Psoas muscle (tissue), 8 donors: ENCODE measurements at regions of chr5 and their contacts with region 1.

Region 1: GRCh38 chr5:53170748-53171349 is 61.3 kb upstream of the MOCS2 start:
- DNase-seq: no peak
- ATAC-seq: peak in 1 of 4 donors; percentile 53
- H3K4me3 ChIP-seq: no peak overlapping the region
- H3K27ac ChIP-seq: no peak overlapping the region
- H3K4me1 ChIP-seq: no peaks in the 10 kb centered on the region
- H3K27me3 ChIP-seq: peaks cover 0 to 3% (median 0%) of the 10 kb centered on the region in 3 donors
- CTCF ChIP-seq: peak; percentile 32

Region 2: GRCh38 chr5:53084546-53085255 is 86.1 kb before region 1 on chr5:
- intact Hi-C with region 1: no loop called
- DNase-seq: no peak
- ATAC-seq: no peak
- H3K4me3 ChIP-seq: no peak overlapping the region
- H3K27ac ChIP-seq: no peak overlapping the region
- H3K4me1 ChIP-seq: no peaks in the 10 kb centered on the region
- H3K27me3 ChIP-seq: no peaks in the 10 kb centered on the region
- CTCF ChIP-seq: no peak

Region 3: DNA sequence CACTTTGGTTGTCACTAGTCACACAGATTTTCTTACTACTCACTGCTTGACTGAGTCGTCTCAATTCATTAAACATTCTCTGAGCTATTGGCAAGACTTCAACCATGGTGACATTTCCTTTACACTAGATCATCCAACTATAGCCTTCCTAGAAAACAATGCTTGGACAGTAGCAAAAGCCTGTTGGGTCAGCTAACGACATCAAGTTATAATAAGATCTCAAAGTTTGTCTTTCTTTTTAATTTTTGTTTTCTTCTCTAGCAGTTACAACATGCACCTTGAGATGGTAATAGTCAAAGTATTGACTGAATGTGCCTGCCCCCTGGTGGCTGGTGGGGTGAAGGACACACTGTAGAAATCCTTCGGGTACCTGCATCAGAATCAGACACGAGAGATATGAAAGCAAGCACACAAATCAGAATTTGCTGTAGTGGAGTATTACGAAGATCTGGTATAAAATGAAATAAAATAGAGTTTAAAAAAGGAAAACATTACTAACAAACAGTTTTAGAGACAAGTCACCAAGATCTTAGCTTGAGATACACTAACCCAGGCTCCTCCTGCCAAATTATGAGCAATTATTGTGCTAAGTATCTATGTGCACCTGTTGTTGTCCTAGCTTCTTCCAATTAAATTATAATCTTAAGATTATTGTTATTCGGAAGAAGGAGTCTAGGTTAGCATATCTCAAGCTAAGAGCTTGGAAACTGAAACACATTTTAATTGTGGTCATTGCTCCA is 1058.4 kb after region 1 on chr5:
- intact Hi-C with region 1: loop called (anchors 5 to 10 kb)
- DNase-seq: peak; percentile 65 to 79
- ATAC-seq: peak; percentile 49 to 83 (median 74)
- H3K4me3 ChIP-seq: no peak overlapping the region
- H3K27ac ChIP-seq: no peak overlapping the region
- H3K4me1 ChIP-seq: peaks cover 4% of the 10 kb centered on the region
- H3K27me3 ChIP-seq: no peaks in the 10 kb centered on the region
- CTCF ChIP-seq: peak; percentile 85